Mammary epithelial cell (primary cell): ENCODE measurements at regions of chr18 and their contacts with region 1.

Region 1: DNA sequence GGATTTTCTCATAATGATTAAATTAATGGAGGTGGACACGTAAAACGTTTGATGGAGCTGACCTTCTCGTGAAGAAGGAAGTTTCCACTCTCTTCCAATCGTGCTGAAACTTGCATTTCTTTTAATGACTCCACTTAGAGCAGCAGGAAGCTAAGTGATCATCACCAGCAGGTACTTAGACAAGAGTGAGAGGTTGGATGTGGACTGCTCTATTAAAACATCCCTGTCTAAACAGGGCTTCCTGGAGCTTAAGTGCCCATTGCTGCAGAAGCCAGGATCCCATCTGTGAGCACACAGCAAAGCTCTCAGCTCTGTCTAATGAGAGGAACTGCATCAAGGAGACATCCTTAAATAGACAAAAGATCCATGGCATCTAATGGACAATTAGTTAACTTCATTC is 1539.5 kb upstream of the CELF4 start:
- DNase-seq: no peak
- H3K4me3 ChIP-seq: no peak overlapping the region
- H3K27ac ChIP-seq: no peak overlapping the region
- H3K4me1 ChIP-seq: no peaks in the 10 kb centered on the region
- H3K27me3 ChIP-seq: peaks cover 3% of the 10 kb centered on the region
- CTCF ChIP-seq: no peak

Region 2: GRCh38 chr18:39375066-39375465 is 270.0 kb after region 1 on chr18:
- CTCF ChIA-PET with region 1: no interaction called
- dilution Hi-C with region 1: no loop called
- in situ Hi-C with region 1: no loop called
- intact Hi-C with region 1: loop called (anchors 10 kb)
- DNase-seq: no peak
- H3K4me3 ChIP-seq: no peak overlapping the region
- H3K27ac ChIP-seq: no peak overlapping the region
- H3K4me1 ChIP-seq: no peaks in the 10 kb centered on the region
- H3K27me3 ChIP-seq: no peaks in the 10 kb centered on the region
- CTCF ChIP-seq: no peak

Region 3: DNA sequence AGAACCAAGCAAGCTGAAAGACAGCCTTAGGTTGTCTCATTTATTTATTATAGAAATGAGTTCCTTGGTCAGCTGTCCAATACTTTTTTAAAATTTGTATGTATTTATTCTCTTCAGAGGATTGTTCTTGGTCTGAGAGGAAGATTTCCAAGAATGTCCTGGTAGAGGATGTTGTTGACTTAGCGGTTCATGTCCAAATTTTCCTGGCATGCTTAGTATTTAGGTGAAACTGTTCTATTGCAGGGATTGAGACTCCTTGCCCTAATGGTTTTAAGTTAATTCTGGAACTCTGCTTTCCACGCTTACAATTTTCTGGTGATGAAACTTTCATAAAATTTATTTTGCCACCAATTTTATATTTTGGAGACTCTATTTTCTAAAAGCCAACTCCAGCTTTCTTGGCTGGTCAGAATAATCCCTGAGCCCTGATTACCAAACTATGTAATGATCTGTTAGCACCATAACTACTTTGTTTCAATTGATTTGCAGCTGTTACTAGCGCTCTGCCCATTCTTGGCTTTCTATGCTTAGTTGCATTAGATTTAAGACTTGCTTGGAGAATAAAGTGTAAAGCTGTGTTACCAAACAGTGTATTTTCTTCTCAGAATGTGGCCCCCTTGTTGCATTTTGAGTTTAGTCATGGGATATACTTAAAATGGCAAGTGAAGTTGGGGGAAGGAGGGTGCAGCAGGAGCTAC is 329.3 kb after region 1 on chr18:
- CTCF ChIA-PET with region 1: no interaction called
- dilution Hi-C with region 1: no loop called
- in situ Hi-C with region 1: no loop called
- intact Hi-C with region 1: no loop called
- DNase-seq: no peak
- H3K4me3 ChIP-seq: no peak overlapping the region
- H3K27ac ChIP-seq: no peak overlapping the region
- H3K4me1 ChIP-seq: no peaks in the 10 kb centered on the region
- H3K27me3 ChIP-seq: no peaks in the 10 kb centered on the region
- CTCF ChIP-seq: no peak